Mammary epithelial cell (primary cell): ENCODE measurements at regions of chr5 and their contacts with region 1.

Region 1: GRCh38 chr5:68344447-68345111 is 129.0 kb downstream of the PIK3R1 start:
- DNase-seq: peak; percentile 93
- H3K4me3 ChIP-seq: no peak overlapping the region
- H3K27ac ChIP-seq: peak overlapping the region; percentile 94
- H3K4me1 ChIP-seq: peaks cover 30% of the 10 kb centered on the region
- H3K27me3 ChIP-seq: no peaks in the 10 kb centered on the region
- CTCF ChIP-seq: no peak

Region 2: DNA sequence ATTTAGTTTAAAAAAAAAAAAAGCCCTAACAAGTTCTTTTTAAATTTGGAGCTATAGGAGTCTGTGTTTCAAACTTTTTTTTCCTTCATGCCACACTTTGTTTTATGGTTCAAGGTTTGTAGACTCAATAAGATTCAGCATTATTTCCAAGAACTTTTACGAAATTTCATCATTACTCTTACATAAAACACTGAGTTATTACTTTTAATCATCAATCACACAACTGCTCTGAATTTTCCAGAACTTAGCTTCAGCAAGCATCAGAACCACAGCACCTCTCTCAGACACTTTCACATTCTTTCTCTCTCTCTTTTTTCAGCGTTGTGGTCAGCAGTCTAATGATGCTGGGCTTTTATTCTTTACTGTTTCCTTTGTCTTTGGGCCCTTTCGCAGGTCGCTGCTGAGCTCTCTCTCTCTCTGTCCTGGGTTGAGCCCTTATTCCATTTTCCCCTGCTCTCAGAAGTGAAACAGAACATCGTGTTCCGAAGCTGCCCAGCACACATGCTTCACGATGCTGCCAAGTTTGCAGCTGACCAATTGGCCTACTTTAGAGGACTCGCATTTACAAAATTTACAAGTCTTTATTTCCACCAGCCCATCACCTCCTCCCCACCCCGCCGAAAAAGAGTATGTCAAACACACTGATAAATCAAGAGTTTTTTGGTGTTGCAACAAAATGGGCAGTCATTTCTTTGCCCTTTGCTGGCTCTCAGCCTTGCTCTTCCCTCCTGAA is 173.6 kb before region 1 on chr5:
- CTCF ChIA-PET with region 1: no interaction called
- dilution Hi-C with region 1: no loop called
- in situ Hi-C with region 1: no loop called
- intact Hi-C with region 1: no loop called
- DNase-seq: no peak
- H3K4me3 ChIP-seq: no peak overlapping the region
- H3K27ac ChIP-seq: no peak overlapping the region
- H3K4me1 ChIP-seq: no peaks in the 10 kb centered on the region
- H3K27me3 ChIP-seq: no peaks in the 10 kb centered on the region
- CTCF ChIP-seq: no peak

Region 3: GRCh38 chr5:68333649-68334552 is 10.7 kb before region 1 on chr5:
- CTCF ChIA-PET with region 1: no interaction called
- dilution Hi-C with region 1: no loop called
- in situ Hi-C with region 1: no loop called
- intact Hi-C with region 1: loop called (anchors 1 kb)
- DNase-seq: peak; percentile 94
- H3K4me3 ChIP-seq: no peak overlapping the region
- H3K27ac ChIP-seq: peak overlapping the region; percentile 76
- H3K4me1 ChIP-seq: peaks cover 48% of the 10 kb centered on the region
- H3K27me3 ChIP-seq: no peaks in the 10 kb centered on the region
- CTCF ChIP-seq: peak; percentile 30 to 59

Region 4: DNA sequence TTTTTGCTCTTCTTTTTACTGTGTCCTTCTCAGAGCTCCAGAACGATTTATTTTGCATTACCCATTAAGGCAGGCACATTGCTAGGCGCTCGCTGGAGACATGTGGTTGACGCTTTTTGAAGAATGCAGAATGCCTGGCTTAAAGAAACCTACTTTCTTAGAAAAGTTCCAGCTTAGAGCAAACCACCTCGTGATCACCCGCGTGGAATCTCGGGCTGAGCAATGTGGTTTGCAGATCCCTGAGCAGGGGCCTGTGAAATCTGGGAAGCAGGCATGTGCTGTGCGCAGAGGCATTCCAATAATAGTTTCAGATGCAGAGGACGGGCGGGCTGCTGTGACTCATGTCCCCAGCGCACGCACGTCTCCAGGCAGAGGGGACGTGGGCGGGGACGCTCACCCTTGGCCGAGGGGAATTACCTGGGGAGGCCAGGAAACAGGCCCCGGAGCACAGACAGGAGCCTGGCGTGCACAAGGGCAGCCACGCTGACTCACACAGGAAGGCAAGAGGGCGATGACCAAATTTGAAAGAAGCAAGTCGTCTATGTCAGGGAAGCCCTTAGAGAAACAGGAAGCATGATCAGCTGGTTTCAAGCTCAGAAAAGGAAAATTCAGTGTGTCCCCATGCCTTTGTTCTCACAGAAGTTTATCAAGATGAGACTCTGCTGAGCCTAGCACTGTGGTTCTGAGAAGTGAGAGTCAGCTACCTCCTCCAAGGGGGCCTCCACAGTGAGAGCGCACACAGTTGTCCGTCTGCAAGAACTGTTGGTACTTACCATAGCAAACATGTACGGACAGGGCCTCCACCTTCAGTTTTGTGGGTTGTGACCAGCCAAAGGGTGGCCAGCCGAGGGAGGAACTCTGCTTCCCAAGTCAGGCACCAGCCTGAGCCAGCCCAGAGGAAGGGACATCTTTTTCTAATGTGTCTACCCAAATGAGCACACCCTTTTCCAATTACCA is 89.6 kb after region 1 on chr5:
- CTCF ChIA-PET with region 1: no interaction called
- dilution Hi-C with region 1: no loop called
- in situ Hi-C with region 1: no loop called
- intact Hi-C with region 1: loop called (anchors 1 kb)
- DNase-seq: peak; percentile 100
- H3K4me3 ChIP-seq: no peak overlapping the region
- H3K27ac ChIP-seq: peak overlapping the region; percentile 90
- H3K4me1 ChIP-seq: peaks cover 45% of the 10 kb centered on the region
- H3K27me3 ChIP-seq: no peaks in the 10 kb centered on the region
- CTCF ChIP-seq: no peak